ENCODE measurements at regions of chr18 and their contacts with region 1.

Region 1: GRCh38 chr18:54269893-54270844 is 852 bp downstream of the POLI start:
- DNase-seq: peak; percentile 59
- H3K4me3 ChIP-seq: peak overlapping the region; percentile 11 to 61 (median 56)
- H3K27ac ChIP-seq: peak overlapping the region; percentile 70
- H3K4me1 ChIP-seq: peaks cover 6% of the 10 kb centered on the region
- H3K27me3 ChIP-seq: no peaks in the 10 kb centered on the region
- CTCF ChIP-seq: peak; percentile 29 to 37
- POLR2A ChIP-seq: peak; percentile 75

Region 2: DNA sequence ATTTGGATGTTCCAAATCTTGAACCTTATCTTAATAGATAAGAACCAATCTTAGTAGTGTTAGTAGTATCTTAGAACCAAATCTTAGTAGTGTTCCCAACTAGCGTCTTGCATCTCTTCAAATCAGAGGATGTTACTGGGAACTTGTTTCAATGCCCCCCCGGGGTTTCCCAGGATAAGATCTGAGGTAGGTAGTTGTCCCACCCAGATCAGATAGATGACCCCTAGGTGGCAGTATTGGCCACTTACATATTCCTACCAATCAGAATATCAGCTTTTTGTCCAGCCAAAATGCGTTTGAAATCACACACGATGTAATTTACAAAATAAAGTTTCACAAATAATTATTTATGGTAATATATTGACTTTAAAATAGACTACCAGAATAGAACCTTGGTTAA is 360.5 kb before region 1 on chr18:
- CTCF ChIA-PET with region 1: no interaction called
- POLR2A ChIA-PET with region 1: no interaction called
- dilution Hi-C with region 1: no loop called
- intact Hi-C with region 1: loop called (anchors 5 kb)
- DNase-seq: no peak
- H3K4me3 ChIP-seq: no peak overlapping the region
- H3K27ac ChIP-seq: no peak overlapping the region
- H3K4me1 ChIP-seq: no peaks in the 10 kb centered on the region
- H3K27me3 ChIP-seq: no peaks in the 10 kb centered on the region
- CTCF ChIP-seq: peak in 1 of 2 donors; percentile 33
- POLR2A ChIP-seq: no peak

Region 3: DNA sequence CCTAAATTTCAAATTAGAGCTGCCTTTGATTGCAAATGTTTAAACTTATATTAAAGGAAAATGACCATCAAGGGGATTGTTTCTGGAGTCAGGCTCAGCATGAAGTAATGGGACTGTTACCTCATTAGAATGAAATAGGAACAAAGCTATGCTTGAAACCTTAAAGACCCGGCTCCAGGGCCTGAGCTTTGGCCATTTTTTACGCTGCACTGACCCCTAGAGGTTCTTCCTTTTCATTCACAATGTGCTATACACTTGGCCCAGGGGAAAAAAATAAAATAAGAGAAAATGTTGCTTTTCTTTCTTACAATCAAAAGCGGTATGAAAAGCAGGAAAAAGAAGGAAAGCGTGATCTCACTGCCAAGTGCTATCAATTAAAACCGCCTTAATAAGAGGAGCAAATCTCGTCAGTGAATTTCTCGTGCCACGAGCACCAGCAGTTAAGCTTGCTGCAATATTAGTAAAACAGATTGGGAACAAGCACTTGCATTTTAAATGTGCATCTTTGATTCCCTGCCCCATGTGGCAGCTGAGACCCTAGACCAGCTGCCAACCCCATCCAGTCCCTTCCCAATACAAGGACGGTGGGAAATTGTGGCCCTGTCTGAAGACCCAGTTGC is 142.3 kb before region 1 on chr18:
- CTCF ChIA-PET with region 1: interaction called, 19 read pairs
- POLR2A ChIA-PET with region 1: no interaction called
- dilution Hi-C with region 1: no loop called
- intact Hi-C with region 1: no loop called
- DNase-seq: peak; percentile 60
- H3K4me3 ChIP-seq: no peak overlapping the region
- H3K27ac ChIP-seq: no peak overlapping the region
- H3K4me1 ChIP-seq: peaks cover 2% of the 10 kb centered on the region
- H3K27me3 ChIP-seq: no peaks in the 10 kb centered on the region
- CTCF ChIP-seq: peak; percentile 55 to 62
- POLR2A ChIP-seq: no peak

Region 4: DNA sequence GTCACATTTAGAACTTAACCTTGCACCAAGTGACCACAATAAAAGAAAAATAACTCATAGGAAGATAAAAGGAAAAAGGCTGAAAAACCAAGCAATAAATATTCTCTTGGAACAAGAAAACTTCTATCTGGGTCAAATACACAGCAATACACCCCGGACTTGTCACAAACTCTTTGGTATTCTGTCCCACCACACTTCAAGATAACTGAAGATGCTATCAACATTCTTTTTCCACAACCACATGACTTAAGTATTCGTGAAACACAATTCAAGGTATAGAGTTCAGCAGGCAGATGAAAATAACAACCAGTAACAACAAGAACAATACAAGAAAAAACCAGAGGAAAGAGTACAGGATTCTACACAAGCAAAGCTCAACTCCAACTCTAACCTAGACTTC is 63.7 kb before region 1 on chr18:
- CTCF ChIA-PET with region 1: interaction called, 10 read pairs
- POLR2A ChIA-PET with region 1: no interaction called
- dilution Hi-C with region 1: no loop called
- intact Hi-C with region 1: no loop called
- DNase-seq: no peak
- H3K4me3 ChIP-seq: no peak overlapping the region
- H3K27ac ChIP-seq: no peak overlapping the region
- H3K4me1 ChIP-seq: peaks cover 21% of the 10 kb centered on the region
- H3K27me3 ChIP-seq: no peaks in the 10 kb centered on the region
- CTCF ChIP-seq: no peak
- POLR2A ChIP-seq: no peak

Region 5: GRCh38 chr18:54232485-54233227 is 37.5 kb before region 1 on chr18:
- CTCF ChIA-PET with region 1: interaction called, 9 read pairs
- POLR2A ChIA-PET with region 1: interaction called, 4 read pairs
- dilution Hi-C with region 1: no loop called
- intact Hi-C with region 1: loop called (anchors 1 kb)
- DNase-seq: no peak
- H3K4me3 ChIP-seq: no peak overlapping the region
- H3K27ac ChIP-seq: peak overlapping the region; percentile 72
- H3K4me1 ChIP-seq: peaks cover 37% of the 10 kb centered on the region
- H3K27me3 ChIP-seq: no peaks in the 10 kb centered on the region
- CTCF ChIP-seq: no peak
- POLR2A ChIP-seq: no peak

Region 6: GRCh38 chr18:54280220-54280569 is 10.0 kb after region 1 on chr18:
- CTCF ChIA-PET with region 1: interaction called, 11 read pairs
- POLR2A ChIA-PET with region 1: no interaction called
- dilution Hi-C with region 1: no loop called
- intact Hi-C with region 1: no loop called
- DNase-seq: no peak
- H3K4me3 ChIP-seq: no peak overlapping the region
- H3K27ac ChIP-seq: no peak overlapping the region
- H3K4me1 ChIP-seq: peaks cover 2% of the 10 kb centered on the region
- H3K27me3 ChIP-seq: no peaks in the 10 kb centered on the region
- CTCF ChIP-seq: no peak
- POLR2A ChIP-seq: no peak

Measured in endothelial cell of umbilical vein (primary cell).